Activated CD8-positive, alpha-beta T cell treated with anti-CD3 and anti-CD28 coated beads for 36 hours (primary cell): ENCODE measurements at regions of chr21 and their contacts with region 1.

Region 1: GRCh38 chr21:42374864-42375492 is 8.6 kb upstream of the TFF1 start:
- DNase-seq: peak; percentile 24
- ATAC-seq: no peak
- H3K4me3 Mint-ChIP-seq: peak overlapping the region; percentile 15
- H3K27ac Mint-ChIP-seq: peak overlapping the region; percentile 86
- H3K4me1 Mint-ChIP-seq: peaks cover 45% of the 10 kb centered on the region
- H3K27me3 Mint-ChIP-seq: no peaks in the 10 kb centered on the region
- CTCF ChIP-seq: no peak

Region 2: DNA sequence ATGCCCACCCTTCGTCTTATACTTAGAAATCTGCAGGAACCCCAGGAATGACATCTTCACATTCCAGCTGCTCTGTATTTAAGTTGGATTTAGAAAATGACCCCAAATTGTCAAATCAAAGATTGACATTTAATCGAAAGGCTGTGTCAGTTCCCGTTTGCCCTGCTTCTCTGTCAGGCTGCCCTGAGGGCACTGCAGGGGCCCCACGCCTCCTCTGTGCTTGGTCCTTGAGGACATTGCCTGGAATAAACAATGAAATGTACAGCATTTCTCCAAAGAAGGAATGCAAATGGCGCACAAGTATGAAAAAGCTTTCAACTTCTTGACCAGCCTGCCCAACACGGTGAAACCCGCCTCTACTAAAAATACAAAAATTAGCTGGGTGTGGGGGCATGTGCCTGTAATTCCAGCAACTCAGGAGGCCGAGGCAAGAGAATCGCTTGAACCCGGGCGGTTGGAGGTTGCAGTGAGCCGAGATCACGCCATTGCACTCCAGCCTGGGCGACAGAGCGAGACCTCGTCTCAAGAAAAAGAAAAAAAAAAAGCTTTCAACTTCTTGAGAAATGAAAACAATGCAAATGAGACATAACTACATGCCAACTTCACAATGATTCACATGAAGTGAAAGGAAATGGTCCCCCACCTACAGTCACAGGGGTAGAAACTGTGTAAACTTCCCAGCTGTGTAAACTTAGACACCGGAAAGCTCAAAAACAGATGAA is 17.9 kb after region 1 on chr21:
- CTCF ChIA-PET with region 1: interaction called, 3 read pairs
- POLR2A ChIA-PET with region 1: interaction called, 15 read pairs
- intact Hi-C with region 1: no loop called
- DNase-seq: peak; percentile 41
- ATAC-seq: peak; percentile 94
- H3K4me3 Mint-ChIP-seq: peak overlapping the region; percentile 65
- H3K27ac Mint-ChIP-seq: peak overlapping the region; percentile 88
- H3K4me1 Mint-ChIP-seq: peaks cover 77% of the 10 kb centered on the region
- H3K27me3 Mint-ChIP-seq: no peaks in the 10 kb centered on the region
- CTCF ChIP-seq: no peak